ENCODE measurements at regions of chr11 and their contacts with region 1.

Region 1: GRCh38 chr11:65418711-65419459 is 3.7 kb upstream of the NEAT1 start:
- DNase-seq: peak; percentile 99
- H3K4me3 ChIP-seq: peak overlapping the region; percentile 80
- H3K27ac ChIP-seq: peak overlapping the region; percentile 100
- H3K4me1 ChIP-seq: peaks cover 81% of the 10 kb centered on the region
- H3K27me3 ChIP-seq: no peaks in the 10 kb centered on the region
- CTCF ChIP-seq: no peak

Region 2: GRCh38 chr11:65500387-65501185 is 81.7 kb after region 1 on chr11:
- intact Hi-C with region 1: loop called (anchors 5 kb)
- DNase-seq: no peak
- H3K4me3 ChIP-seq: peak overlapping the region; percentile 89
- H3K27ac ChIP-seq: peak overlapping the region; percentile 99
- H3K4me1 ChIP-seq: peaks cover 71% of the 10 kb centered on the region
- H3K27me3 ChIP-seq: no peaks in the 10 kb centered on the region
- CTCF ChIP-seq: no peak

Region 3: GRCh38 chr11:65516135-65516935 is 97.5 kb after region 1 on chr11:
- intact Hi-C with region 1: loop called (anchors 5 kb)
- DNase-seq: peak; percentile 8
- H3K4me3 ChIP-seq: no peak overlapping the region
- H3K27ac ChIP-seq: no peak overlapping the region
- H3K4me1 ChIP-seq: no peaks in the 10 kb centered on the region
- H3K27me3 ChIP-seq: no peaks in the 10 kb centered on the region
- CTCF ChIP-seq: no peak

Measured in left ventricle myocardium inferior (tissue), 1 donor.